Activated T-helper 1 cell treated with anti-CD3 and anti-CD28 coated beads, Interleukin-12 subunit alpha, Interleukin-12 subunit beta, Interleukin-2, Interleukin-4 antibody, amounts not matched to agents 30 ng/mL and 10 ng/mL and 1 ng/mL, durations not matched to agents 14 hours and 24 hours and 36 hours (primary cell): ENCODE measurements at regions of chr16 and their contacts with region 1.

Region 1: DNA sequence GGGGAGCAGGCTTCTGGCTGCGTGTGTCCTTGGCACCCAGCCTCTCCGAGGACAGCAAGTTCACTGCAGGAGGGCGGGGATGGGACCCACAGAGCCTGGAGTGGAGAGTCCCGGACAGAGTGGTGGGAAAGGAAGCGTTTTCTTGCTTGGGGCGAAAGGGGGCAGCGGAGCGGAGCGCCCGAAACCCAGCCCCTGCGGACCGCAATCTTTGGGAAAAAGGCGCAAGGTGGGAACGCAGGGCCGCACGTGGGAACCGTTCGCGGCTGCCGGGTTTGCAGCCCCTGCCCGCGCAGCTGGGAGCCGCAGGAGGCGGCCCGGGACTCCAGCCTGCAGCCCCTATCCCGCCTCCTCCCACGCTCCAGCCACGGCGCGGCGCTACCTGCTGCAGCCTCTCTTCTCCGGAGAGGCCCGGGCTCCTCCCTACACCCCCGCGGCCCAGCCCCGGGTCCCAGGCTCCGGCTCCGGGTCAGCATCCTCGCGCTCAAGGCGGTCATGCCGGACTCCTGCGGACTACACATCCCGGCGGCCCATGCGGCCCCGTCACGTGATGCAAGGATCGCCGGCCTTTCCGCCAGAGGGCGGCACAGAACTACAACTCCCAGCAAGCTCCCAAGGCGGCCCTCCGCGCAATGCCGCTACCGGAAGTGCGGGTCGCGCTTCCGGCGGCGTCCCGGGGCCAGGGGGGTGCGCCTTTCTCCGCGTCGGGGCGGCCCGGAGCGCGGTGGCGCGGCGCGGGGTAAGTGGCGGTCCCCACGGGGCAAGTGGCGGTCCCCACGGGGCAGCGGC is at the starts of genes NTHL1 and TSC2:
- DNase-seq: peak; percentile 95
- H3K4me3 Mint-ChIP-seq: peak within 1 kb of the TSS; percentile 93
- H3K27ac Mint-ChIP-seq: peak within 1 kb of the TSS; percentile 83
- H3K4me1 Mint-ChIP-seq: peaks cover 21% of the 10 kb centered on the region
- H3K27me3 Mint-ChIP-seq: no peaks in the 10 kb centered on the region
- total RNA-seq, gene NTHL1: 50.0 and 52.7 TPM in 2 replicates
- total RNA-seq, gene TSC2: 96.4 and 111 TPM in 2 replicates

Region 2: DNA sequence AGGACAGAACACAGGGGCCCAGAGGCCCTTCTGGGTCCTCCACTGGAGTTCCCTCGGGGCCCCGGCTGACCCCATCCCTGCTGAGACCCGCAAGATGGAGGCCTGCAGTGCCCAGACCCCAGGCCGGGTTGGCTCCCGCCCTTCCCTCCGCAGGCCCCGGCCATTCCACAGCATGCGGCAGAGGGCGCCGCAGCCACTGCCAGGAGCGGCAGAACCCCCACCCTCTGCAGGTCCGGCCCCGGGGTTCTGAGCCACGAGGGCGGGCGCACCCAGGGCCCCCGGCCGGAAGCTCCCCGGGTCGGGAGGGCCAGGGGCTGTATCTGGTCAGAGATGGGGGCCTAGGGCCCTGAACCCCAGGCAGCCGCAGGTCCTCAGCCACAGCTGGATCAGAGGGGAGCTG is 619.0 kb before region 1 on chr16:
- intact Hi-C with region 1: loop called (anchors 10 kb)
- DNase-seq: peak; percentile 29
- H3K4me3 Mint-ChIP-seq: no peak overlapping the region
- H3K27ac Mint-ChIP-seq: no peak overlapping the region
- H3K4me1 Mint-ChIP-seq: no peaks in the 10 kb centered on the region
- H3K27me3 Mint-ChIP-seq: no peaks in the 10 kb centered on the region

Region 3: DNA sequence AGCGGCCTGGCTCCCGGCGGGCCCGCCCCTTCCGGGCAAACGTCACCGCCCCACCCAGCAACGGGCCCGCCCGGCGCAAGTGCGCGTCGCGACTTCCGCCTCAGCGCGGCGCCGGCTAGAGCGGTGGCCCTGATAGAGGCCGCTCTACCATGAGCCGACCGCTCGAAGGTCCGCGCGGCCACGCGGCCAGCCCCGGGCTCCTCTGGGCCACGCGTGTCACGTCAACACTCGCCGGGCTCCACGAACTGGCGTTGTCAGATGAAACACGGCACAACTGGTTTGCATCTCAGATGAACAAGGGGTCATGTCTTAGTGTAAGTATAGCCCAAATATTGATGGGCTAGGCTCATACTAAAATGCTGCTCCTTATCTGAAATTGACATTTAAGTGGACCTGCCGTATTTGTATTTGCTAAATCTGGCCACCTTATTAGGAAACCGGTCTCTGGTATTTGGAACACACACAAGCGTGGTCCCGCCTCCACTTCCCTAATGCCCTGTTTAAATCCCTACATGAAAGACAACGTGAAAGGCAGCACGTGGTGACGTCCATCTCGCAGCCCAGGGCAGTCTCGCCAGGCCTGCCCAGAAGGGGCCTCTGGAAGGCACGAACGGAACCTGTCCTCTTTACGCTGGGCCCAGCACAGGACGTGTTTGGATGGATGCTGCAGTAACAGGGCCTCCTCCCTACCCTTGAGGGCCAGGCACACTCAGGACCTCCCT is 37.6 kb before region 1 on chr16 and contains the start of gene ZNF598:
- intact Hi-C with region 1: loop called (anchors 1 kb)
- DNase-seq: peak; percentile 77
- H3K4me3 Mint-ChIP-seq: peak within 1 kb of the TSS; percentile 92
- H3K27ac Mint-ChIP-seq: peak within 1 kb of the TSS; percentile 87
- H3K4me1 Mint-ChIP-seq: peaks cover 26% of the 10 kb centered on the region
- H3K27me3 Mint-ChIP-seq: no peaks in the 10 kb centered on the region
- total RNA-seq, gene ZNF598: 100 and 105 TPM in 2 replicates

Region 4: DNA sequence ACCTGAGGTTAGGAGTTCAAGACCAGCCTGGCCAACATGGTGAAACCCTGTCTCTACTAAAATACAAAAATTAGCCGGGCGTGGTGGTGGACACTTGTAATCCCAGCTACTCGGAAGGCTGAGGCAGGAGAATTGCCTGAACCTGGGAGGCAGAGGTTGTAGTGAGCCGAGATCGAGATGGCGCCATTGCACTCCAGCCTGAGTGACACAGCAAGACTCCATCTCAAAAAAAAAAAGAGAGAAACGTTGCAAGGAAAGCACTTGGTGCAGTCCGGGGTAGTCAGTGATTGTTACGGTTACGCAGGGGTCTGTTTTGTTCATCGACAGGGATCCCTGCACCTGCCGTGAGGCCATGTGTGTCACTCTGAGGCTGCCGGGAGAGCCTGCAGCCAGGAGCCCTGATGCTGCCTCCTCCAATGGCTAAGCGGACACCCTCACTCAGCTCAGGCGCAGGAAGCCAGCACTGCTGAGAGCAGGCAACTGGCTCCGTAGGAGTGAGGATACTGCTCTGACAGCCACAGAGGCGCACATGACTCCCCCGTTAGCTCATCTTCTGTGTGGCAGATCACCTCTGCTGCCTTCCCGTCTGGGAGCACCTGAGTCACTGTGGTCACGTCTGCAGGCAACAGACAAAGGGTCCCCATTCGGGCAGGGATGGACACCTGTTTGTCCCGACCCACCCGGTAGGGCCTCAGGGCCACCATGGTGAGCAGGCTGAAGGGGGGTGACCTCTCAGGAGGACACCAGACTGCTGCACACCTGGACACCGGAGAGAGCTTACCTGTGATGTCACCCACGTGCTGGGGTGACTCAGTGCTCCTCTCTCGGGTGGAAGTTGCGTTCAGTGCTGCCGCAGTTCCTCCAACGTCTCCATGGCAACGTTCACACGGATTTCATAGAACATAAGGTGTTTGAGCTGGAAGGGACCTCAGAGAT is 95.7 kb after region 1 on chr16:
- intact Hi-C with region 1: loop called (anchors 1 kb)
- DNase-seq: no peak
- H3K4me3 Mint-ChIP-seq: no peak overlapping the region
- H3K27ac Mint-ChIP-seq: no peak overlapping the region
- H3K4me1 Mint-ChIP-seq: peaks cover 10% of the 10 kb centered on the region
- H3K27me3 Mint-ChIP-seq: peaks cover 15% of the 10 kb centered on the region

Region 5: DNA sequence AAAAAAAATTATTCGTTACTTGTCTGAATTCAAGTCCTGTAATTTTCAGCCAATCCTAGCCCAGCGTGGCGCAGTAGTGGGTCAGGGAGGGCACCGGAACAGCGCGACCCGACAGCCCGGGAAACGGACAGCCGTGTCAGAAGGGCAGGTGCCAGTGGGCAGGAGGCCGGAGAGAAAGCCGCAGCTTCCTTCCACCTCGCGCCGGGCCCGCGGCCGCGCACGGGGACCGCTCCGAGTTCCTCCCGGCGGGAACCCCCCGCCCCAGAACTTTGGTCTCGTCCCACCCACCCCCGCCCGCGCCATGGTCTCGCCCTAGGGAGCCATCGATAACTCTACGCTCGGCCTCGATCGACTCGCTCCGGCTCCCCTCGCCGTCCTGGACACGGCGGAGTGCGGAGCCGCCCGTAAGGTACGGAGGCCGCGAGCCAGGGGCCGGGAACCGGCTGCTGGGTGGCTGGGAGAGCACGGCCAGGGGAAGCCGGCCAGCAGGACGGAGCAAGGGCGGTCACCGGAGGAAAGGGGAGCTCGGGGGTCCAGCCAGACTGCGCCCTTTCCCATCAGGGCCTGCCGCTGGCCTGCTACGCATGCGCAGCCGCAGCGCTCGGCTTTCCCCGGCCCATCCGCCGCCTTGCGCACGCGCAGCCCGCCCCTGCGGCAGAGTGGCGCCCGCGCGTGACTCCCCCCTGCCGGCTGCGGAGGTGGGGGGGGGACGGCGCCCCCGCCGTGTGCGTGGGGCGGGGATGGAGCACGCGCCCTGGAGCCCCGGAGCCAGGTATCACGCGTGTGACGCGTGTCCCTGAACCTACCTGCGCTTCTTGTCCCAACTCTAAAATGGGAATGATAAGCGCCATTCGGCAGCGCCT is 157.8 kb after region 1 on chr16 and contains the start of gene MLST8:
- intact Hi-C with region 1: loop called (anchors 1 kb)
- DNase-seq: peak; percentile 90
- H3K4me3 Mint-ChIP-seq: peak within 1 kb of the TSS; percentile 86
- H3K27ac Mint-ChIP-seq: peak within 1 kb of the TSS; percentile 68
- H3K4me1 Mint-ChIP-seq: peaks cover 22% of the 10 kb centered on the region
- H3K27me3 Mint-ChIP-seq: peaks cover 13% of the 10 kb centered on the region
- total RNA-seq, gene MLST8: 57.0 and 61.9 TPM in 2 replicates